RWPE1 (cell line): ENCODE measurements at regions of chr1 and their contacts with region 1.

Region 1: DNA sequence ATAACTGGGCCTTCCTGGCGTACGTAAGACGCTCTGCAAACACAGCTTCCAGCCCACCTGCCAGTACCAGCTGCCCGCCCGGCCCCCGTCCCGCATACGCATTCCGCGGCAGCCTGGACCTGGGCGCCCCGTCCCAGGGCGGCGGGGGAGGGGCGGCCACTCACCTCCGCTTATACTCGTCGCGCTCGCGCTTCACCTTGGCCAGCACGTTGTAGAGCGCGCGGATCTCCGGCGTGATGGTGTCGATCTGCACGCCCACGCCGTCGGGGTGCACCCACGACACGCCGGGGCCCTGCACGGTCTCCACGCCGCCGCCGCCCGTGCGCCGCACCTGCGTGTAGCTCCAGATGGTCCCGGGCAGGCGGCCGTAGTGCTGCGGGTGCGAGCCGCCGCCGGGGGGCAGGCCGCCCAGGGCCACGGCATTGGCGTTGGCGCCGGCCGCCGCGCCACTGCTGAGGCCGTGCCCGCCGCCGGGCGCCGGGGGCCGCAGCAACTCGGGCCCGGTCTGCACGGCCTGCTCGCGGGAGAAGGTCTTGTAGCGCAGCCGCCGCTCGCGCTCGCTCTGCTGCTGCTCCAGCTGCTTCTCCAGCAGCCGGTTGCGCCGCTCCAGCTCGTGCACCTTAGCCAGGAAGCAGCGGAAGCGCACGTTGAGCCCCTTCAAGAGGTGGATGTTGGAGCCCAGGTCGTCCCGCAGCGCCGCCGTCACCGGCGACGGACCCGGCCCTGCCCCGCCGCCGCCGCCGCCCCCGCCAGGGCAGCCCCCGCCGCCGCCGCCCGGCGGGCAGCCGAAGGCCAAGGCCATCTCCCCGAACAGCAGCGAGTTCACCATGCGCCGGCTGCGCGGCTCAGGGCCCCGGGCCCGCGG is 740 bp downstream of the IFFO2 start:
- DNase-seq: peak; percentile 31
- H3K27ac ChIP-seq: peak overlapping the region; percentile 82
- CTCF ChIP-seq: peak; percentile 28; the same call in 1 of the 2 replicates

Region 2: GRCh38 chr1:19204446-19205266 is 248.9 kb after region 1 on chr1:
- CTCF ChIA-PET with region 1: interaction called, 10 read pairs
- POLR2A ChIA-PET with region 1: no interaction called
- DNase-seq: no peak
- H3K27ac ChIP-seq: no peak overlapping the region
- CTCF ChIP-seq: no peak